ENCODE measurements at regions of chr2 and their contacts with region 1.

Region 1: GRCh38 chr2:112941753-112942658 is 31.0 kb downstream of the IL37 start:
- DNase-seq: peak; percentile 87
- ATAC-seq: peak; percentile 98
- H3K4me3 Mint-ChIP-seq: no peak overlapping the region
- H3K27ac Mint-ChIP-seq: no peak overlapping the region
- H3K4me1 Mint-ChIP-seq: no peaks in the 10 kb centered on the region
- H3K27me3 Mint-ChIP-seq: peaks cover 26% of the 10 kb centered on the region

Region 2: GRCh38 chr2:112737542-112738232 is 204.3 kb before region 1 on chr2:
- CTCF ChIA-PET with region 1: interaction called, 21 read pairs
- DNase-seq: no peak
- ATAC-seq: no peak
- H3K4me3 Mint-ChIP-seq: no peak overlapping the region
- H3K27ac Mint-ChIP-seq: no peak overlapping the region
- H3K4me1 Mint-ChIP-seq: no peaks in the 10 kb centered on the region
- H3K27me3 Mint-ChIP-seq: no peaks in the 10 kb centered on the region

Region 3: DNA sequence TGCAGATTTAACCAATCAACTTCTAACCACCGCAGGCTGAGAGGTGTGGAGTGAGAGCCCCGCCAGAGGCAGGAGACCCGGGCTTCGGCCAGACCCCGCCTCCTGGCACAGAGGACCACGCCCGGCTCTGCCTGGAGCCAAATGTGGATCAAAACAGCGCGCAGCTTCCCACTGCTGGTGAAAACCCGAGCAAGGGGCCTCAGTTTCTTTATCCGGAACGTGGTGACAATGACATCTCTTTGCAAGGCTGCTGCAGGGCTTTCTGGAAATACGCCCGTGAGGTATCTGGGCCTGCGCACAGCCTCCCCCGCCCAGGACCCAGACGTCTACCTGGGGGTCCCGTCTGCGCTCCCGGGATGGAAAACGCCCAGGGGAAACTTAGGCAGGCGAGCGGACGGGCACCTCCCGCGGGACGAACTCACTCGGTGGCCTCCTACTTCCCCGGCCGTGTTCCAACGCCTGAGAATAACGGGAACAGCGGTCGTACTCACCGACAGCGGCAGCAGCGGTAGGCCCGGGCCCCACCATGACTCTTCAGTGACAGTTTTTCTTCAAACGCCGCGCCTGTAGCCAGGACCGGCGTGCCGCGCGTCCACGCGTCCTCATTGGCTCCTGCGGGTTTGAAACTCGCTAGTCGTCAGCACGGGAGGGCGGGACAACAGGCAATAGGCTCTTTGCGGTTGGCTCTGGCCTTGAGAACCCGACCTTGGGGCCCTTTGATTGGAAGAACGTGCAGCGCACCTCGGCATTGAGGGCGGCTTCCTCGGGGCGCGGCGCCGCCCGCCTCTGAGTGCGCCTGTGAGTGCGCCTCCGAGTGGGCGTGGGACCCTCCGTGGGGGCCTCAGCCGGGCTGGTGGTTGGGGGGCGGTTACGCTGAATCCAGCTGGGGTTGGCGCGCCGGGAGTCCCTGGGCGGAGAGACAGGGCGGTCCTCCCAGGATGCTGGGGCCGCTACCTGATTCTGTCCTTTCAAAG is 177.6 kb before region 1 on chr2 and contains the start of gene CKAP2L:
- CTCF ChIA-PET with region 1: interaction called, 15 read pairs
- DNase-seq: peak; percentile 99
- ATAC-seq: peak; percentile 97
- H3K4me3 Mint-ChIP-seq: peak within 1 kb of the TSS; percentile 85
- H3K27ac Mint-ChIP-seq: peak within 1 kb of the TSS; percentile 99
- H3K4me1 Mint-ChIP-seq: peaks cover 57% of the 10 kb centered on the region
- H3K27me3 Mint-ChIP-seq: no peaks in the 10 kb centered on the region
- total RNA-seq, gene CKAP2L: 62.2 to 68.8 TPM

Region 4: DNA sequence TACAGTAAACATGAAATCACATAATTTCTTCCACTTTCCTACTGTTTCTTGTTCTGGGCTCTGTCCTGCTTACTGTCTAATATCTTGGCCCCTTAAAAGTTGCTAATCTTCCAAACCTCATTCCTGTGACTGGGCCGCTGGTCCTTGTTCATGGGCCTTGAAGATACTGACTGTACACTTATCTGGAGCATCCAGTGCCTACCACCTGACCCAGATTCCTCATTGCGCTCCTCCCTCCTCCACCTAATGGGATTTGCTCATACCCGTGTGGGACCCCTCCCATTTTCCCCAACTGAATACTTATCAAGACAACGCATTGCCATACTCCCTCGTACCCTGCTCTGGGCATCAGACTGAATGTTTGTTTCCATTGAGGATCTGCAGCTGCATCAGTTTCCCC is 37.1 kb before region 1 on chr2:
- CTCF ChIA-PET with region 1: interaction called, 16 read pairs
- DNase-seq: no peak
- ATAC-seq: no peak
- H3K4me3 Mint-ChIP-seq: no peak overlapping the region
- H3K27ac Mint-ChIP-seq: no peak overlapping the region
- H3K4me1 Mint-ChIP-seq: peaks cover 14% of the 10 kb centered on the region
- H3K27me3 Mint-ChIP-seq: peaks cover 3% of the 10 kb centered on the region

Region 5: DNA sequence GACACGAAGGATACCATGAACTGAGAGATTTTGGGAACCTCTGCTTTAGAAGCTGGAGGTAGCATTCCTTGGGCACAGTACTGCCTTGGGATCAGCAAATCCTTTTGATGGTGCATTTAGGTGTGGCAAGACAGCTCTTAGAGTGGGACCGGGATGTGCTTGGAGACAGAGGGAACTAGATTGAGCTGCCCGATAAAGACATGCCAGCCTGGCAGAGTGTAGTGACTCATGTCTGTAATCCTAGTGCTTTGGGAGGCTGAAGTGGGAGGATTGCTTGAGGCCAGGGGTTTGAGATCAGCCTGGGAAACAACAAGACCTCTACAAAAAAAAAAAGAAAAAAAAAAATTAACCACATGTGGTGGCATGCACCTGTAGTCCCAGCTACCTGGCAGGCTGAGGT is 13.2 kb before region 1 on chr2:
- CTCF ChIA-PET with region 1: interaction called, 42 read pairs
- DNase-seq: no peak
- ATAC-seq: no peak
- H3K4me3 Mint-ChIP-seq: no peak overlapping the region
- H3K27ac Mint-ChIP-seq: no peak overlapping the region
- H3K4me1 Mint-ChIP-seq: no peaks in the 10 kb centered on the region
- H3K27me3 Mint-ChIP-seq: peaks cover 2% of the 10 kb centered on the region

Measured in activated CD8-positive, alpha-beta memory T cell treated with anti-CD3 and anti-CD28 coated beads, Interleukin-2, amount 10 ng/mL, durations not matched to agents 7 days and 5 days (primary cell).